ENCODE measurements at regions of chr19 and their contacts with region 1.

Region 1: DNA sequence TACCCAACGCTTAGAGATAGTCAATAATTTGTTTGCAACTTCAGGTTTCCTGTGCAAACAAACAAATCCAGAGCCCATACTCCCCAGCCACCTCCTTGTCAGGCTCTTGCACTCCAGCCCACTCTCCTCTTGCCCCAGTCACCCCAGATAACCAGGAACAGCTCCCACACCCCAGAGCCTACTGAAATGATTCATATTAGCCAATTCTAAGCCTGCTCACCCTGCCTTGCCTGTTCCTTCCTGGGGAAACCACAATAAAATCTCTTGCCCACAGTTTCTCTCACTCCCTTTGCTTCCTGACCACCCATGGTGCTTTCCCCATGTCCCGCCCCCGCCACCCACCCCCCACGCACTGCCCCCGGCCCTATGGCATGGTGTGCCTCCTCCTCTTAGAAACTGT is 3.8 kb upstream of the ACTL9 start:
- DNase-seq: no peak
- H3K4me3 ChIP-seq: no peak overlapping the region
- H3K27ac ChIP-seq: no peak overlapping the region
- H3K4me1 ChIP-seq: no peaks in the 10 kb centered on the region
- H3K27me3 ChIP-seq: peaks cover 0 to 31% of the 10 kb centered on the region in 2 donors
- CTCF ChIP-seq: no peak
- POLR2A ChIP-seq: no peak

Region 2: GRCh38 chr19:8681345-8682029 is 20.9 kb before region 1 on chr19:
- intact Hi-C with region 1: loop called (anchors 1 kb)
- DNase-seq: no peak
- H3K4me3 ChIP-seq: no peak overlapping the region
- H3K27ac ChIP-seq: no peak overlapping the region
- H3K4me1 ChIP-seq: no peaks in the 10 kb centered on the region
- H3K27me3 ChIP-seq: peaks cover 0 to 16% of the 10 kb centered on the region in 2 donors
- CTCF ChIP-seq: no peak
- POLR2A ChIP-seq: no peak